ENCODE measurements at regions of chr12 and their contacts with region 1.

Region 1: GRCh38 chr12:80053048-80053790 is 46.1 kb upstream of the OTOGL start:
- DNase-seq: peak; percentile 26 to 53 (median 35)
- ATAC-seq: no peak
- H3K4me3 ChIP-seq: no peak overlapping the region
- H3K4me1 ChIP-seq: no peaks in the 10 kb centered on the region
- CTCF ChIP-seq: no peak

Region 2: DNA sequence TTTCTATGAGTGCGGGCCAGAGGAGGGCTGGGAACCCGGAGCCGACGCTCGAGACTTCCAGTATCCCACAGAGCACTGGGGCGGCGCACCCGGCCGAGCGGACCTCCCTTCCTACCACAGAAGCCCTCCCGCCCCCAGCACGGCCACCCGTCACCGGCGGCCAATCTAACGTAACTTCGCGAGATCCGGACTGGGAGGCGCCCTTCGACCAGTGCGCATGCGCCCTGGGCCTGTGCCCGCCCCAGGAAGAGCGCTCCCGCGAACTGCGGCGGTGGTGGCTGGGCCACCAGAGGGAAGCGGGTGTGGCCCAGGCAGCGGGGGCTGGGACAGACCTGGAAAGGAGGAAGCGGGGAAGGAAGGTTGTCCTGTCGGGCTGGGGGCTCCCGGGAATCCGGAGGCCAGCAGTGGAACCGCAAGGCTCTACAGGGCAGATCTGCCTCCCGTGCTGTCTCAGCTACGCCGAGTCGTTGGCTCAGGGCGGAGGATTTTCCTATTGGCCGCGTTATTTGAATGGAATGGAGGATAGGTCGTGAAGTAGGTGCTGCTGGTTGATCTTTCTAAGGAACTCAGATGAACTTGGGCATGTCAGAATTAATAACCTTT is 118.1 kb before region 1 on chr12 and contains the start of gene PPP1R12A:
- intact Hi-C with region 1: loop called in 1 of 2 experiments (anchors 10 kb)
- DNase-seq: peak; percentile 97 to 98 (median 98)
- ATAC-seq: peak; percentile 97
- H3K4me3 ChIP-seq: peak within 1 kb of the TSS; percentile 86
- H3K4me1 ChIP-seq: peaks cover 9% of the 10 kb centered on the region
- CTCF ChIP-seq: no peak
- total RNA-seq, gene PPP1R12A: 63.7 to 253 (median 74.3) TPM

Region 3: DNA sequence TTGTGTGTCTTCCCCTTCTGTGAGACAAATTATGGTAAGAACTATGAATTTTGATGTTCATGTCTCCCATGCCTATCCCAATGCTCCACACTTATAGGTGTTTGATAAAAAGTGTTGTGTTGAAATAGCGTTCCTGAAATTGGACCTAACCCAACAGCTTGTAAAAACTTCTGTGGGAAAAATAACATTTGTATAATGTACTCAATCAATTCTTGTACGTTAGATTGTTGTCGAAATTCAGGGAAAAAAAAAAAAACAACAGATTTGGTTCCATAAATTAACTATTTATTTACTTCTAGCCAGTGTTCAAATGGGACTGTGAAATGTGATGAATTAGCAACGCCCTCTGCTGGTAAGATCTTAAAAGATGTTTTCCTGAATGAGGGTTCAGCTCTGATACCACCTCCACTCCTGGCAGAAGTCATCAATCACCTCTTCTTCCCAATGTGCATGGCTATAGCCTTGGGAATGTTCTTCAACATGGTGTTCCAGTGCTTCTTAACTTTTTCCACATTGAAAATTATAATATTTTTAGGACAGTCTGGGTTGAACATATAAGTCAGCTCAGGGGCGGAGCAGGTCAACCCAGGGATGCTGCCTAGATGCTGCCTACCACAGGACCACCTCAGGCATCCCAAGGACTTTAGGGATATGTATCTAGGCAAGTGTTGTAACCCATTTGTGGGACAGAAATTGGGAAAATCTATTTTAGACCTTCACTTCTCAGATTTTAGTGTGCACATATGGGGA is 216.8 kb after region 1 on chr12:
- intact Hi-C with region 1: no loop called
- DNase-seq: peak in 1 of 3 donors; percentile 11
- ATAC-seq: peak; percentile 44
- H3K4me3 ChIP-seq: no peak overlapping the region
- H3K4me1 ChIP-seq: no peaks in the 10 kb centered on the region
- CTCF ChIP-seq: no peak

Measured in mucosa of descending colon (tissue), 3 donors.